Right cardiac atrium (tissue), 5 donors: ENCODE measurements at regions of chr3 and their contacts with region 1.

Region 1: GRCh38 chr3:42547401-42547945 is 34.3 kb downstream of the SEC22C start:
- DNase-seq: peak; percentile 67 to 89 (median 86)
- ATAC-seq: peak; percentile 50 to 63
- H3K4me3 ChIP-seq: no peak overlapping the region
- H3K27ac ChIP-seq: no peak overlapping the region
- H3K4me1 ChIP-seq: peaks cover 5% of the 10 kb centered on the region
- H3K27me3 ChIP-seq: no peaks in the 10 kb centered on the region

Region 2: GRCh38 chr3:42459151-42459550 is 88.3 kb before region 1 on chr3:
- intact Hi-C with region 1: loop called in 1 of 4 experiments (anchors 2 kb)
- DNase-seq: no peak
- ATAC-seq: peak in 1 of 2 donors; percentile 37
- H3K4me3 ChIP-seq: no peak overlapping the region
- H3K27ac ChIP-seq: no peak overlapping the region
- H3K4me1 ChIP-seq: no peaks in the 10 kb centered on the region
- H3K27me3 ChIP-seq: no peaks in the 10 kb centered on the region

Region 3: GRCh38 chr3:42635111-42635510 is 87.6 kb after region 1 on chr3:
- intact Hi-C with region 1: no loop called
- DNase-seq: no peak
- ATAC-seq: no peak
- H3K4me3 ChIP-seq: no peak overlapping the region
- H3K27ac ChIP-seq: no peak overlapping the region
- H3K4me1 ChIP-seq: no peaks in the 10 kb centered on the region
- H3K27me3 ChIP-seq: no peaks in the 10 kb centered on the region